OCI-LY7 (cell line): ENCODE measurements at regions of chr6 and their contacts with region 1.

Region 1: GRCh38 chr6:33344701-33345697 is 27.5 kb upstream of the ZBTB22 start:
- DNase-seq: peak; percentile 91
- H3K4me3 ChIP-seq: peak overlapping the region; percentile 39
- H3K27ac ChIP-seq: peak overlapping the region; percentile 86
- H3K4me1 ChIP-seq: peaks cover 49% of the 10 kb centered on the region
- CTCF ChIP-seq: peak; percentile 75

Region 2: DNA sequence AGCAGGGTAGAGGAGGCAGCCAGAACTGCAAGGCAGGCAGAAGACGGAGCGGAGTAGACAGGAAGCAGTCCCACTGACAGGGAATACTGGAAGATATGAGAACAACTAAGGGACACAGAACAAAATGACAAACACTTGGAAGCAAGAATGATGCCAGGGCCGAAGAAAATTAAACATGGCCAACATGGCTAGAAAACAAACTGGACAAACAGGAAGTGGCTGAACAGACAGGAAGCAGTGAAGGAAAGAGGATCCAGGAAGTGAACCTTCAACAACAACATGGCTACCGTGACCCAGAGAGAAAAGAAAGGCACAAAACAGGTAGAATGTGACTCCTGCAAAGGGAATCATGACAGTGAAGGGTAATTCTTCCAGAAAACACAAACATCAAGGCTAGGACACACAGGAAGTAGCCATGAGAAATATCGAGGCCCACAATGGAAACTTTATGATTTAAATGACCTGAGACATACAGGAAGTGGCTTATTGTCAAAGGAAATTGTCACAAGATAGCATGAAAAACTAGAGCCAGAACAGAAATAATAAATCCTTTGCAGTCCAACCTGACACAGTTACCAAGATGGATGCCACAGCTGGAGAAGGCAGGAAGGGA is 161.8 kb before region 1 on chr6:
- CTCF ChIA-PET with region 1: no interaction called
- POLR2A ChIA-PET with region 1: no interaction called
- intact Hi-C with region 1: no loop called
- DNase-seq: peak; percentile 64
- H3K4me3 ChIP-seq: peak overlapping the region; percentile 40
- H3K27ac ChIP-seq: peak overlapping the region; percentile 47
- H3K4me1 ChIP-seq: peaks cover 14% of the 10 kb centered on the region
- CTCF ChIP-seq: no peak

Region 3: DNA sequence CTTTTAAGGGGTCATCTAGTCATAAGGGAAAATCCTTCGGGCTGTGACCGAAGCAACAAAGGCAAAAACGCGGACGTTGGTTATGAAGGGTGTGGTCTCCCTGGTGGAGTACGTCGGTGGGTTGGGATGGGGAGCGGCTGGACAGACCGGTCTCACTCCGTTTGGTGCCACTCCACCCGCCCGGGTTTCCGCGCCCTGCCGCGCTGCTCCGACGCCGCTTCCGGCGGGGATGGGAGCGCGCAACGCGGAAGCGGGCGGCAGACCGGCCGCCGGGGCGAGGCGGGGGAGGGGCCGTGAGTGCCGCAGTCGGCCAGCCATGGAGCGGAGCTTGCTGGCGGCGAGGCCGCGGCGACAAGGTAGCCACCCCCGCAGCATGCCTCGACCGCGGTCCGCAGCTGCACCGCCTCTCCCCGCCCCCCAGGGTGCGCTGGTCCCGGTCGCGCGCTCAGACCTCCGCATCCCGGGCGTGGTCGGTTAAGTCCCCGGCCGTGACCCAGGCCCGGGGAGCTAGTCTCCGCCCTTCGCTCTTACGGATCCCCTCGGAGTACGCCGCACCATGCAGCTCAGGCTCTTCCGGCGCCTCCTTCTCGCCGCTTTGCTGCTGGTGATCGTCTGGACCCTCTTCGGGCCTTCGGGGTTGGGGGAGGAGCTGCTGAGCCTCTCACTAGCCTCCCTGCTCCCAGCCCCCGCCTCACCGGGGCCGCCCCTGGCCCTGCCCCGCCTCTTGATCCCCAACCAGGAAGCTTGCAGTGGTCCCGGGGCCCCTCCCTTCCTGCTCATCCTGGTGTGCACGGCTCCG is 67.9 kb before region 1 on chr6 and contains the start of gene B3GALT4:
- CTCF ChIA-PET with region 1: no interaction called
- POLR2A ChIA-PET with region 1: interaction called, 3 read pairs
- intact Hi-C with region 1: loop called (anchors 2 kb)
- DNase-seq: peak; percentile 83
- H3K4me3 ChIP-seq: peak within 1 kb of the TSS; percentile 97
- H3K27ac ChIP-seq: peak within 1 kb of the TSS; percentile 93
- H3K4me1 ChIP-seq: peaks cover 58% of the 10 kb centered on the region
- CTCF ChIP-seq: peak; percentile 53
- total RNA-seq, gene B3GALT4: 13.1 and 14.2 TPM in 2 replicates

Region 4: DNA sequence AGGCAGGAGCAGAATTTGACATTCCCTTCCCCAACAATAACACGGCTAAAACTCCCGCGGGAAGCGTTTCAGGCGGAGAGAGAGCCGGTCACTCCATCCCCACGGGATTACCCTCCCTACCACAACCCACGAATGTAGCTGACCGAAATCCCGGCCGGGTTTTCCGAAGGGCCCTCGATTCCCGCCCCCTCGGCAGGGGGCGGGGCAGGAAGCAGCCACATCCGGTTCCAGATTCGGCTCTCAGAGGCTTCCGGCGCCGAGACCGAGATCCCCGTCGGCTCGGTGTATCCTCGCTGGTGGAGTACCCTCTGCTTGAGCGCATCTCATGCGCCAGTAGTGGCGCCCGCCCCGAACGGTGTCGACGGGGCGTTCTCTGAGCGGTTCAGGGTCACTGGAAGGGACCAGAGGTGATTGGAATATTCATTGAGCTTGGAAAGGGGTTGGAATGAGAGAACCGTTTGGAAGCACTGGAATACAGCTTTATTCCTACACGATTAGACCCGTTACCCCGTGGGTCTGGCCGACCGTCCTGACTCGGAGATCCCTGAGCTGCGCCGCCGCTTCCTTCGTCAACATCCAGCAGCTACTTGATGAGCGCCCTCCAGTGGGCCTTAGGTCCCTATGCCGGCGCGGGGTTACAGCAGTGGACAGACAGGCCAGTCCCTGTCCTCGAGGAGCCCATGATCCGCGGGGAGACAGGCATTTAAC is 45.6 kb before region 1 on chr6:
- CTCF ChIA-PET with region 1: no interaction called
- POLR2A ChIA-PET with region 1: interaction called, 8 read pairs
- intact Hi-C with region 1: loop called (anchors 2 kb)
- DNase-seq: peak; percentile 96
- H3K4me3 ChIP-seq: peak overlapping the region; percentile 83
- H3K27ac ChIP-seq: peak overlapping the region; percentile 93
- H3K4me1 ChIP-seq: peaks cover 21% of the 10 kb centered on the region
- CTCF ChIP-seq: peak; percentile 78

Region 5: DNA sequence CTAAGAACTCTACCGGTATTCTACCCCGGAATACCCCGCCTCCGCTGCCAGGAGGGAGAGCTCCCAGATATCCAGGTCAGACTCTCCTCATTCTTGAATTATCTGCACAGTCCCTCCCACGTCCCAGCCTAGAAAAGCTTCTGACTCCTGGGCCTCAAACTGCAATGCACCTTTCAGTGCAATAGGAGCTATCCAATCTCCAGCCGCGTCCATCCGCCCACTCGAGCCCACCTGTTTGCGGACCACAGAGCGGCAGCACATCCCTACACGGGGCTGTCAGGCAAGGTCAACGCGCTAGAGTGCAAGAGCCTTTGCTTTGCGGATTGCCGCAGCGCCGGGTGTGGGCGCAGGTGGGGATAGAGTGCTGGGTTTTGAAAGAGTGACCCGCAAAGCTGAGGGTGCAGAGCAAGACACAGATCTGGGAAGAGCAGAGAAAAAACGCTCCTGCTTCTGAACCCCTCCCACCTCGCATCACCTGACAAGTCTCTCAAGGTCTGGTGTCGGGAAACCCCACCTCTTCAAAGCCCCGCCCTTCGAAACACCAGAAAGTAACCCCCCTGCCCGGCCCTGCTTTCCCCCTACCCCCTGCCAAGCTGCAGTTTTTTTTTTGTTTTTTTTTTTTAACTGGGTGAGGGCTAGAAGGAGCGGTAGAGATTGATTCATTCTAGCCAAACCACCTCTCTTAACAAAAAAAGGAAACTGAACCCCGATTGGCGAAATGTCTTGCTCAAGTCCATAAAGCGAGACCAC is 32.4 kb before region 1 on chr6:
- CTCF ChIA-PET with region 1: interaction called, 6 read pairs
- POLR2A ChIA-PET with region 1: interaction called, 20 read pairs
- intact Hi-C with region 1: loop called (anchors 1 kb)
- DNase-seq: peak; percentile 88
- H3K4me3 ChIP-seq: peak overlapping the region; percentile 84
- H3K27ac ChIP-seq: peak overlapping the region; percentile 94
- H3K4me1 ChIP-seq: peaks cover 28% of the 10 kb centered on the region
- CTCF ChIP-seq: 0 out of 2 replicates have a peak, but pooled peaks have one; percentile 16

Region 6: GRCh38 chr6:33317669-33318425 is 27.2 kb before region 1 on chr6 and contains the start of gene ZBTB22:
- CTCF ChIA-PET with region 1: interaction called, 6 read pairs
- POLR2A ChIA-PET with region 1: interaction called, 20 read pairs
- intact Hi-C with region 1: loop called (anchors 1 kb)
- DNase-seq: peak; percentile 98
- H3K4me3 ChIP-seq: peak within 1 kb of the TSS; percentile 73
- H3K27ac ChIP-seq: peak within 1 kb of the TSS; percentile 79
- H3K4me1 ChIP-seq: peaks cover 55% of the 10 kb centered on the region
- CTCF ChIP-seq: no peak
- total RNA-seq, gene ZBTB22: 17.4 and 21.6 TPM in 2 replicates

Region 7: DNA sequence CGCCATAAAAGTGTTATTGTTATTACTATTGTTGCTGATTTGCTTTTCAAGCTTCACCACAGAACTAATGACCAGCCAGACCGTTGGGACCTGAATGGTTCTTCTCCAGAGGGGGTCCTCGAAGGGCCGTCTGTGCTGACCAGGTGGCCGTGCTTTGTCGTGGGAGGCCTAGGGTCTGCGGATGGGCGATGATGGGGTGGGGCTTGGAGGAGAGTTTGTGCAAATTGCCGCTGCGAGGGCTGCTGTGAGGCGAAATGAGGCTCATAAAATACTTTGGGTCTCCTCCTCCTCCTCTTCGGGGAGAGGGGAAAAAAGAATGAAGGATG is 21.4 kb before region 1 on chr6:
- CTCF ChIA-PET with region 1: no interaction called
- POLR2A ChIA-PET with region 1: interaction called, 20 read pairs
- intact Hi-C with region 1: loop called (anchors 1 kb)
- DNase-seq: no peak
- H3K4me3 ChIP-seq: peak overlapping the region; percentile 88
- H3K27ac ChIP-seq: peak overlapping the region; percentile 98
- H3K4me1 ChIP-seq: peaks cover 56% of the 10 kb centered on the region
- CTCF ChIP-seq: no peak

Region 8: GRCh38 chr6:33781114-33781975 is 436.3 kb after region 1 on chr6:
- CTCF ChIA-PET with region 1: no interaction called
- POLR2A ChIA-PET with region 1: no interaction called
- intact Hi-C with region 1: no loop called
- DNase-seq: no peak
- H3K4me3 ChIP-seq: no peak overlapping the region
- H3K27ac ChIP-seq: no peak overlapping the region
- H3K4me1 ChIP-seq: peaks cover 8% of the 10 kb centered on the region
- CTCF ChIP-seq: no peak